Endothelial cell of umbilical vein (primary cell): ENCODE measurements at regions of chr2 and their contacts with region 1.

Region 1: DNA sequence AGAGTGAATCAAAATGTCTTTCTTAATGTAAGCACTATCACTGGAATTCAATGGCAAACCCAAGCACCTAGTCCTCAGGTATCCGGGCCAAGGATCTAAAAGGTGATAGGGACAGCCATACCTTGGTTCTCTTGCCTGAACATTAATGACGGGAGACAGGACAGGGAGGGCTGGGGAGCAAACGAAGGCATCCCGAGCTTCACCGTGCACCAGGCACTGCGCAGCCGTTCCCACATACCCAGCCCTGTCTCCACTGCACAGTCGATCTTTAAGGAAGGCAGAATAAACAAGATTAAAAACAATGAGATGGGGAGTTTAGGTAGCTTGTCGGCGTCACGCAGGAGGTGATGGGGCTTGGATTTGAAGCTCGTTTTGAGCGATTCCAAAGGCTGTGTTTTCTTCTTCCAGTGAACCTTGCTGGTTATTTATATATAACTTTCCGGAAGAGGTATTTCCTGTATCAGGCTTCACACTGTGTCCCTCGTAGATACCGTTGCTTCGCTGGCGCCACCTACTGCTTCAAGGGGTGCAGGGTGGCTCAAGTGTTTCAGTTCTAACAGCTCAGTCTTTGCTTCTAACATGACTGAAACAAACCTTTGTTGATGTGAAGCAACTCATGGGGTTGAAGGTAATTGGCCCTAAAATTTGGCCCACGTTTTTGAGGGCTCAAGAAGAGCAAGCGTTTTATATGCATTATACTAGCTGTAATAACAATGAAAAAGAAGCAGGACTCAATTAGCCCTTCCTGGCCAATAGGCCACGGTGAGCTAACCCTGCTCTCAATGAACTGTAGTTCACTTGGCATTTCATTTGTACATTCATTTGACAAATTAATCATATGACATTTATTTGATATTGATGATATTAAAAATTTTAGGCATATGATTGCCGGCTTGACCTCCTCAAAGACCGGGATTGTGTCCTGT is 77.4 kb downstream of the DCDC2C start:
- DNase-seq: peak; percentile 51
- H3K4me3 ChIP-seq: no peak overlapping the region
- H3K27ac ChIP-seq: no peak overlapping the region
- H3K4me1 ChIP-seq: peaks cover 4% of the 10 kb centered on the region
- H3K27me3 ChIP-seq: no peaks in the 10 kb centered on the region
- CTCF ChIP-seq: peak; percentile 60 to 65
- POLR2A ChIP-seq: no peak

Region 2: DNA sequence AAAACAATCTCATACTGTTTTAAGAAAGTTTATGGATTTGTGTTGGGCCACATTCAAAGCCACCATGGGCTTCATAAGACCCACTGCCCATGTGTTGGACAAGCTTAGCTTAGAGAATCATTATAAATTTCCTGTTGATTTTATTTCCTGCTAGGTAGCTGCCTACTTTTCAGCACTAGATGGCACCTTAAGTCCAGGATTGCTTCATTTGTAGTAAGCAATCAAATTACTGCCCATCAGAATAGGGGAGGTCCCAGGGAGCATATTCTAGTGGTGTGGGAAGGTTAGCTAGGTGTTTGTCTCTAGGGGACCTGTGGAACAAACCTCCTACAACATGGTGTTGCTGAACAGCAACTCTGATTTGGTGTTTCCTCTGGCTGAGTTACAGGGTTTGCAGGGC is 88.4 kb before region 1 on chr2:
- CTCF ChIA-PET with region 1: no interaction called
- POLR2A ChIA-PET with region 1: no interaction called
- dilution Hi-C with region 1: no loop called
- intact Hi-C with region 1: loop called (anchors 2 kb)
- DNase-seq: peak; percentile 22
- H3K4me3 ChIP-seq: no peak overlapping the region
- H3K27ac ChIP-seq: no peak overlapping the region
- H3K4me1 ChIP-seq: no peaks in the 10 kb centered on the region
- H3K27me3 ChIP-seq: no peaks in the 10 kb centered on the region
- CTCF ChIP-seq: peak in 1 of 2 donors; percentile 9
- POLR2A ChIP-seq: no peak